Prostate gland (tissue), 2 donors: ENCODE measurements at regions of chr20 and their contacts with region 1.

Region 1: DNA sequence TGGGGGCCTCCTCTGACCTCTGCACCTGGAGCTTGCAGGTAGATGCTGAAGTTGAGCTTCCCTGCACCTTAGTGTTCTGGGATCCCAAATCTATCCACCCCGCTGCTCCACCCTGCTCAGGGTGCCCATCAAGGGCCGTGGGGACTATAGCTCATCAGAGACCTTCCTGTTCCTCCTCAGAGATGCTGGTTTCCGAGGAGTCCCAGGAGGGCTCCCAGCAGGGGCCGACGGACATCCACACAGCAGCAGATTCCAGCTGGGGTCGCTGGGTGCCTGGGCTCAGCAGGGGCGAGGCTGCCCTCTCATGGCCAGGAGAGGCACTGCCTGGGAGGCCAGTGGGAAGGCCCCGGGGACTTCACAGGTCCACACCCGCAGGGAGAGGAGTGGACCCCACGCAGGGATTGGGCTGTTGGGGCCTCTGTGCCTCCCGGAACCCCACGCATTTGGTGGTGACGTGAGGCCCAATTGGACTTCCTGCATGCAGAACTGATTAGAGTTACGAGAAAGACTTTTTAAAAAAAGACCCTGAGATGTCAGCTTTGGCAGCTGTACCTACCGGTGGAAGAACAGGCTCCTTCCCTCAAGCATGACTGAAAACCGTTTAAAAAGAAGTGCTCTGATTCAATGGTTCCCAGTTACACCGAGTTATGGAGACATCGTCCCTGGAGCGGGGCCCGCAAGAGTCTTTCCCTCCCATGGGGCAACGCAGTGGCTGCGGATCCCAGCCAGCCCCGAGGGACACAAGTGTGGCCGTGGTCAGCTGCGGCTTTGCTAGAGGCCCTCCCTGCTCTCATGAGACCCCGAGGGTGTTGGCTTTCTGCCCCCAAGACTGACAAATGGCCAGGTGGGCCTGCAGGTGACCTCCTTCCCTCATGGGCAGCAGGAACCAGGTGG is 25.3 kb upstream of the SLCO4A1 start:
- DNase-seq: peak; percentile 45
- H3K4me3 ChIP-seq: no peak overlapping the region
- H3K27ac ChIP-seq: no peak overlapping the region
- H3K4me1 ChIP-seq: no peaks in the 10 kb centered on the region
- H3K27me3 ChIP-seq: no peaks in the 10 kb centered on the region
- CTCF ChIP-seq: peak; percentile 76 to 97 (median 86)
- POLR2A ChIP-seq: no peak

Region 2: DNA sequence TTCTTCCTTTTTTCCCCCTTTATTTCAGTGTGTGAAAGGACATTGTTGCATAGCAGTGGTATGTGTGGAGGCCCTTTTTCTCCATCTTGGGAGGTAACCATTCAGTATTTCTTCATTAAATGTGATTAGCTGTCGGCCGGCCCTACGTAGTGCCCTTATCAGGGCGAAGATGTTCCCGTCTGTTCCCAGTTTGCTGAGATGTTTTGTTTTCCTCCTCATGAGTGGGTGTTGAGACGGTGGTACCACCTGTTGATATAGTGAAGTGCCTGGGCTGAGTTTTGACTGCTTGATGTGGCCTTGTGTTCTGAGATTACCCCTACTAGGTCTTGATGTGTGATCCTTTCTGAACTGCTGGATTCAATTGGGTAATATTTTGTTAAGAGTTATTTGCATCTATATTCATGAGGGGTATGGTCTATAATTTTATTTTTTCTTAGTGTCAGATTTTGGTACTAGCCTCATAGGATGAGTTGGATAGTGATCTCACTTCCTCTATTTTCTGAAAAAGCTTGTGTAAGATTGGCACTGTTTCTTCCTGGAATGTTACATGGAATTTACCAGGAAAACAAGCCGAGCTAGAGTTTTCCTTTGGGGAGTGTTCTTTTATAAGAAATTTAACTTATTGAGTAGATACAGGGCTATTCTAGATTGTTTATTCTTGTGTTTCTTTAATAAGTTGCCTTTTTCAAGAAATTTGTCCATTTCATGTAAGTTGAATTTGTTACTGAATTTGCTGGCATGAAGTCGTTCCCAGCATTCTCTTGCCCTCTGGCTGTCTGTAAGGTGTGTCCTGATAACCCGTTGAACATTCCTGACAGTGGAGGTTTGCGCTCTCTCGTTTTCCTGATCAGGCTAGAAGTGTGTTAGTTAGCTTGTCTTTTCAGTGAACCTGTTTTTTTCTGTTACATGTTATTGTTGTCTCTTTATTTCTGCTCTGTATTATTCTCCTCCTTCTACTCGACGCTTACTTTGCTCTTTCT is 429.8 kb before region 1 on chr20:
- intact Hi-C with region 1: no loop called
- DNase-seq: no peak
- H3K4me3 ChIP-seq: no peak overlapping the region
- H3K27ac ChIP-seq: no peak overlapping the region
- H3K4me1 ChIP-seq: peaks cover 4% of the 10 kb centered on the region
- H3K27me3 ChIP-seq: no peaks in the 10 kb centered on the region
- CTCF ChIP-seq: no peak
- POLR2A ChIP-seq: no peak

Region 3: GRCh38 chr20:62407221-62407992 is 209.6 kb before region 1 on chr20 and contains the start of gene CABLES2:
- intact Hi-C with region 1: loop called (anchors 5 kb)
- DNase-seq: peak; percentile 94
- H3K4me3 ChIP-seq: peak within 1 kb of the TSS; percentile 60 to 63
- H3K27ac ChIP-seq: peak within 1 kb of the TSS in 1 of 2 donors; percentile 36
- H3K4me1 ChIP-seq: peaks cover 23% of the 10 kb centered on the region
- H3K27me3 ChIP-seq: no peaks in the 10 kb centered on the region
- CTCF ChIP-seq: peak in 2 of 4 experiments; percentile 60 to 62
- POLR2A ChIP-seq: peak; percentile 28
- total RNA-seq, gene CABLES2: 4.1 to 31.3 TPM